ENCODE measurements at regions of chr9 and their contacts with region 1.

Region 1: DNA sequence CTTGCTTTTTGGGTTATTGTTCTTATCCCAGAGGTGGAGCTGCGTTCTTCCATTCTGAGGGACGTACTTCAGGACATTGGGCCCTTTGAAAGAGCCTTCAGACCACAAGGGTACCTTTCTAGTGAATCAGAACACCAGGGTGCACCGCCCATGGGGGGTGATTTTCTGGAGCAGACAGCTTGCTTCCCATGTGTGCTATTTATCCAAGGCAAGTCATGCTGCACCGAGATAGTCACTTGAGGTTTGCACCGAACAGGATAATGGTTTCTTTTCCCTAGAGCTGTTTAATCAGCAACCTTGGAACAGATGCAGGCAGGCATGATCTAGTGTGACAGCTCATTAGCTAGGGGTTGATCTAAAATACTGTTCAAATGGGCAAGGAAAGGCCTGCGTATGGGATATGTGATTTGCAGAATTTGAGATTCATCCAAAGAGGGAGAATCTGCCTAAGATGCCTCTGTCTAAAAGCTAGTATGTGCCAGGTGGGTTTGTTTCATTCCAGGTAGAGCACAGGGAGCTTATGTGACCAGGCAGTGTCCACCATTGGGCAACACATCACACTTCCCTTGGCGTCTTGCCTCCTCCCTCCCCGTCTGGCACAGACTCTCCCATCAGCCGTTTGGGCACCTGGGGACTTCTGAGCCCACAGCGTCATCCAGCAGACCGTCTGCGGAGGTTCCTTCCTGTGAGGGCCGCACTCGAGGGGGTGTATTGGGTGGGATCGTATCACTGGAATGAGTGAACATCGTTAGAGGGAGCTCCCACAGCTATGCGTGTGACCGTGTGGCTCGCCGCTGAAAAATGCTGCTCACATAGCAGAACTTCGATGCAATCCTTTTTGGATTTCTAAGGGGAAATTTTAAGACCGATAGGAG is 23.0 kb downstream of the ABL1 start:
- DNase-seq: peak; percentile 89
- H3K4me3 ChIP-seq: no peak overlapping the region
- CTCF ChIP-seq: no peak

Region 2: DNA sequence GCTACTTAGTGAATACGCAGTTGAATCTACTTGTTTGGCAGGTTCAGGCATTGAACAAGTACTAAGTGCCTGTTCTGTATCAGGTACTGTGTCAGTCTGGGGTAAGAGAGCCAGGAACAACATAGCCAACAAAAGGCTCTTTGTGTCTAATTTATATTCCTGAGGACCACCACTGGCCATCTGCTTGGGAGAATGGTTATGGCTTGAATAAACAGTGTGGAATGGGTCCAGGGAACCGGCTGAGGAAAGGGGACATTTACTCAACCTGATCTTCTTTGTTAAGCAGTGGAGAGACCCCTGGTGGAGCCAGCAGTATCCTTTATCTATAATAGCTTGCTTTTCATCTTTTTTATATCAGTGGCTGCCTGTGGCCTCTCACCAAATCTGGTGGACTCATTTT is 126.0 kb before region 1 on chr9:
- in situ Hi-C with region 1: loop called (anchors 10 kb)
- DNase-seq: peak; percentile 24
- H3K4me3 ChIP-seq: no peak overlapping the region
- CTCF ChIP-seq: peak; percentile 26

Region 3: GRCh38 chr9:130794923-130795495 is 63.1 kb before region 1 on chr9:
- in situ Hi-C with region 1: loop called (anchors 5 kb)
- DNase-seq: no peak
- H3K4me3 ChIP-seq: no peak overlapping the region
- CTCF ChIP-seq: no peak